ENCODE measurements at regions of chr14 and their contacts with region 1.

Region 1: DNA sequence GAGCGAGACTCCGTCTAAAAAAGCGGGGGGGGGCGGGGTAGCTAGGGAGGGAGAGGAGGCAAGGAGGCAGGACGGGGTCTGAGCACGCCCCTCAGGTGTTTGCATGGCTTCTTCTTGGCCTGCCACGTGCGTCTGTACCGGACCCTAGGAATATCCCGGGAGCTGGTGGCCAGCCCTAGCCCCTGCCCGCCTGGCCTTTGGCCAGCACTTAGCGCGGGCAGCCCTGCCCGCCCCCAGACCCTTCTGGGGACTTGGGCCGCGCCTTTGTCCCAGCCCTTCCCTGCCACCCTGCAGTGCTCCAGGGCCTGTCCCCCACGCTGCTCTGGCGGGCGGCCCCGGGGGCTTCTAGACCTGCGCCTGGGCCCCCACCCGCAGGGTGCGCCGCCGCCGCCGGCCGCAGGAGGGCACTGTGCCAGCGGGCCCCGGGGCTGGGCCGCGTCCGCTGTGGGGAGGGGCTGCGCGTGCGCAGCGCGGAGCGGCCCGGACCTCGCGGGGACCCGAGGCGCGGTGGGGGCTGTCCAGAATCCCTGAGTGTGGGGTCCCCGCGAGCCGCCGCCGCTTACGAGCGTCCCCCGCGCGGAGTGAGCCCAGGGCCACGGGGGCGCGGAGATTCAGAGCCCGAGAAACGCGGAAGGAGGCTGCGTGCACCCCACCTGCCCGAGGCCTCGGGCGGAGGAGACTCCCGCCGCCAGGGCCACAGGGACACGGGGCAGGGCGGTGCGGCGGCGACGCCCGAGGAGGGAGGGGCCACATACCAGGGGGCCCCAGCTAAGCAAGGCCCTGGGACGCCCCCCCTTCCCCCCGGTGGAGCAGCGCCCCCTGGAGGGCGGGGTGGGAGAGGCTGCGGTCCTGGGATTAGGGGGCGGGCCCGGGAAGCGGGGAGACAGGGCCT is 21.0 kb downstream of the SLC25A29 start:
- DNase-seq: peak in 1 of 2 experiments; percentile 94
- H3K4me3 ChIP-seq: peak overlapping the region; percentile 44 to 80 (median 47)
- H3K27ac ChIP-seq: peak overlapping the region; percentile 85
- H3K4me1 ChIP-seq: peaks cover 8 to 15% (median 12%) of the 10 kb centered on the region in 4 experiments
- H3K27me3 ChIP-seq: no peaks in the 10 kb centered on the region
- CTCF ChIP-seq: peak in 2 of 3 experiments; percentile 63 to 84; a peak in 3 of 4 replicates
- EP300 ChIP-seq: 0 out of 3 replicates have a peak, but pooled peaks of 1 of the 2 experiments have one; percentile 23
- POLR2A ChIP-seq: no peak; a peak in 1 of 3 replicates
- RAD21 ChIP-seq: peak; percentile 13 to 47; a peak in 3 of 4 replicates

Region 2: GRCh38 chr14:100140452-100141078 is 144.7 kb before region 1 on chr14:
- CTCF ChIA-PET with region 1: no interaction called
- POLR2A ChIA-PET with region 1: no interaction called
- DNase-seq: peak; percentile 58 to 78
- H3K4me3 ChIP-seq: no peak overlapping the region
- H3K27ac ChIP-seq: no peak overlapping the region; the same call in 1 of the 2 replicates
- H3K4me1 ChIP-seq: peaks cover 0 to 6% (median 5%) of the 10 kb centered on the region in 4 experiments; a peak in 5 of 7 replicates
- H3K27me3 ChIP-seq: no peaks in the 10 kb centered on the region; a peak in 1 of 7 replicates
- CTCF ChIP-seq: peak in 2 of 3 experiments; percentile 73 to 78; a peak in 3 of 4 replicates
- EP300 ChIP-seq: no peak
- POLR2A ChIP-seq: no peak
- RAD21 ChIP-seq: peak; percentile 56 to 70

Region 3: DNA sequence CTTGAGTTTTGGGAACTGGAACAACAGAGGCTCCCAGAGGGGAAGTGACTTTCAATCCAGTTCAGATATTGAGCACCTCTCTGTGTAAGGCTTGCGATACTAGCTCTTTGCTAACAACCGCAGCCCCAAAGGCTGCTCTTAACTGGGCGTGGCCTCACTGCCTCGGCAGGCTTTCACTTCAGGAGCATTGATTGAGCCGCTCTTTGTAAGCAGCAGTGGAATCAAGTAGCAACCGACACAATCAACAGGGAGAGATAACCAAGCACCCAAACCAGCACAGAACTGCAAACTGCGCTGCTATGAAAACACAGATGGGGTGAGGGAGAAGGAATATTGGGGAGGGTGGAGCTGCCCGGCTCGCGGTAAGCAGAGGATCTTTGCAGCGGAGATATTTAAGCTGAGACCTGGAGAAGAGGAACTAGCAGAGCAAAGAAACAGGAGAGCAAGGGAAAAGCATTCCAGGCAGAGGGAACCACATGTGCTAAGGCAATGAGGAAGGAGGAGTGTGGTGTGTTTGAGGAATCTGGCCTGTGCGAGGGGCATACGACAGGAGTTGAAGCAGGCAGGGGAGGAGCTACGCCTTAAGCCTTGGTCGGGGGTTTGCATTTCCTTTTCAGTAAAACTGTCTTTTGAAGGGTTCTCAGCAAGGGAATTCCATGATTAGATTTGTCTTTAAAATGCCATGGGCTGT is 63.6 kb before region 1 on chr14:
- CTCF ChIA-PET with region 1: interaction called, 4 read pairs
- POLR2A ChIA-PET with region 1: interaction called, 12 read pairs
- DNase-seq: peak in 1 of 2 experiments; percentile 67
- H3K4me3 ChIP-seq: peak overlapping the region; percentile 32 to 62 (median 46); a peak in 7 of 8 replicates
- H3K27ac ChIP-seq: peak overlapping the region; percentile 78
- H3K4me1 ChIP-seq: peaks cover 17 to 34% (median 23%) of the 10 kb centered on the region in 4 experiments
- H3K27me3 ChIP-seq: no peaks in the 10 kb centered on the region
- CTCF ChIP-seq: no peak
- EP300 ChIP-seq: no peak
- POLR2A ChIP-seq: 0 out of 3 replicates have a peak, but pooled peaks of 1 of the 2 experiments have one; percentile 36
- RAD21 ChIP-seq: no peak

Region 4: GRCh38 chr14:100246826-100247428 is 38.3 kb before region 1 on chr14:
- CTCF ChIA-PET with region 1: interaction called, 16 read pairs
- POLR2A ChIA-PET with region 1: interaction called, 3 read pairs
- DNase-seq: no peak
- H3K4me3 ChIP-seq: no peak overlapping the region
- H3K27ac ChIP-seq: no peak overlapping the region
- H3K4me1 ChIP-seq: peaks cover 4 to 8% (median 5%) of the 10 kb centered on the region in 4 experiments
- H3K27me3 ChIP-seq: no peaks in the 10 kb centered on the region
- CTCF ChIP-seq: peak in 2 of 3 experiments; percentile 45 to 56; a peak in 2 of 4 replicates
- EP300 ChIP-seq: no peak
- POLR2A ChIP-seq: no peak
- RAD21 ChIP-seq: peak in 1 of 2 experiments; percentile 28; a peak in 3 of 4 replicates

Region 5: GRCh38 chr14:100271247-100271939 is 13.9 kb before region 1 on chr14:
- CTCF ChIA-PET with region 1: interaction called, 23 read pairs
- POLR2A ChIA-PET with region 1: interaction called, 32 read pairs
- DNase-seq: no peak
- H3K4me3 ChIP-seq: no peak overlapping the region
- H3K27ac ChIP-seq: no peak overlapping the region
- H3K4me1 ChIP-seq: peaks cover 0 to 15% (median 4%) of the 10 kb centered on the region in 4 experiments; a peak in 6 of 7 replicates
- H3K27me3 ChIP-seq: no peaks in the 10 kb centered on the region
- CTCF ChIP-seq: peak in 2 of 3 experiments; percentile 17 to 45; a peak in 2 of 4 replicates
- EP300 ChIP-seq: no peak
- POLR2A ChIP-seq: no peak
- RAD21 ChIP-seq: peak; percentile 24 to 39; a peak in 2 of 4 replicates

Region 6: GRCh38 chr14:100297302-100298300 is 12.3 kb after region 1 on chr14:
- CTCF ChIA-PET with region 1: interaction called, 14 read pairs
- POLR2A ChIA-PET with region 1: interaction called, 200 read pairs
- DNase-seq: no peak
- H3K4me3 ChIP-seq: no peak overlapping the region
- H3K27ac ChIP-seq: no peak overlapping the region
- H3K4me1 ChIP-seq: no peaks in the 10 kb centered on the region
- H3K27me3 ChIP-seq: no peaks in the 10 kb centered on the region
- CTCF ChIP-seq: no peak
- EP300 ChIP-seq: no peak
- POLR2A ChIP-seq: no peak
- RAD21 ChIP-seq: no peak

Region 7: GRCh38 chr14:100306420-100307219 is 21.4 kb after region 1 on chr14 and contains the start of gene SLC25A29:
- CTCF ChIA-PET with region 1: interaction called, 8 read pairs
- POLR2A ChIA-PET with region 1: interaction called, 200 read pairs
- DNase-seq: peak in 1 of 2 experiments; percentile 89
- H3K4me3 ChIP-seq: peak within 1 kb of the TSS; percentile 70 to 95 (median 81)
- H3K27ac ChIP-seq: peak within 1 kb of the TSS; percentile 74
- H3K4me1 ChIP-seq: peaks cover 10 to 29% (median 19%) of the 10 kb centered on the region in 4 experiments
- H3K27me3 ChIP-seq: no peaks in the 10 kb centered on the region; a peak in 1 of 7 replicates
- CTCF ChIP-seq: no peak
- EP300 ChIP-seq: no peak
- POLR2A ChIP-seq: peak in 1 of 2 experiments; percentile 56; a peak in 2 of 3 replicates
- RAD21 ChIP-seq: no peak; a peak in 1 of 4 replicates
- total RNA-seq, gene SLC25A29: 135 TPM in 2 replicates

Region 8: GRCh38 chr14:100312877-100313400 is 27.7 kb after region 1 on chr14:
- CTCF ChIA-PET with region 1: interaction called, 17 read pairs
- POLR2A ChIA-PET with region 1: interaction called, 200 read pairs
- DNase-seq: no peak
- H3K4me3 ChIP-seq: no peak overlapping the region
- H3K27ac ChIP-seq: no peak overlapping the region
- H3K4me1 ChIP-seq: peaks cover 0 to 7% (median 7%) of the 10 kb centered on the region in 4 experiments; a peak in 5 of 7 replicates
- H3K27me3 ChIP-seq: no peaks in the 10 kb centered on the region; a peak in 2 of 7 replicates
- CTCF ChIP-seq: no peak
- EP300 ChIP-seq: no peak
- POLR2A ChIP-seq: no peak
- RAD21 ChIP-seq: no peak

Measured in H1 (cell line).